ENCODE measurements at regions of chr3 and their contacts with region 1.

Region 1: DNA sequence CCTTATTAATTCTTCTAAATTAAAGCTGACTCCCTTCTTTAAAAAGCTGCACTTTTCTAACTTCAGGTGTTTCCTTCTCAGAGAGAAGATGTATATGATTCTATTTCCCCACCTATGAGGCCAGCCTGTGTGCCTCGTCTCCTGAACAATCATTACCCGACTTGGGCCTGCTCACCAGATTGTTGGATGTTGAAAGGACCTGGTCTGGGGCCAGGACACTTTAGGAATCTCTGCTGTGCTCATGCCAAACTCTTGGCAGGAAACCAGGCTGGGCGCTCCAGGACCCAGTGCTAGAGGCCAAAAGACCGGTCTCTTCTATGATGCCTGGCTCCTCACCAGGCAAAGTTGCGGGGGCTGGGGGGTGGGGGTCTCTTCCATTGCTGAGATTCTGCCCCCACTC is 16.9 kb upstream of the LRRC31 start:
- DNase-seq: no peak
- CTCF ChIP-seq: no peak

Region 2: DNA sequence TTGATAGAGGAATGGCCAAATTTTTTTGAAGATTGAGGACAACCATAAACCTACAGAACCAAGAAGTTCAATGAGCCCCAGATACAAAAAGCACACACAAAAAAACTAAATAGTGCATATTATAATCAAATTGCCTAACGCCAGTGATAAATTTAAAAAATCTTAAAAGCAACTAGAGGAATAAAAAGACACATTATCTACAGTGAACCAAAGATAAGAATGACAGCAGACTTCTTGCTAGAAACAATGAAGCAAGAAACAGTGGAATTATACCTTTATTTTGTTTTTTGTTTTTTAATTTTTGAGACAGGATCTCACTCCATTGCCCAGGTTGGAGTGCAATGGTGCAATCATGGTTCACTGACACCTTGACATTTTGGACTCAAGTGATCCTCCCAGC is 14.8 kb after region 1 on chr3:
- CTCF ChIA-PET with region 1: interaction called, 10 read pairs
- POLR2A ChIA-PET with region 1: no interaction called
- DNase-seq: no peak
- CTCF ChIP-seq: no peak